HepG2 (cell line): ENCODE measurements at regions of chr10 and their contacts with region 1.

Region 1: DNA sequence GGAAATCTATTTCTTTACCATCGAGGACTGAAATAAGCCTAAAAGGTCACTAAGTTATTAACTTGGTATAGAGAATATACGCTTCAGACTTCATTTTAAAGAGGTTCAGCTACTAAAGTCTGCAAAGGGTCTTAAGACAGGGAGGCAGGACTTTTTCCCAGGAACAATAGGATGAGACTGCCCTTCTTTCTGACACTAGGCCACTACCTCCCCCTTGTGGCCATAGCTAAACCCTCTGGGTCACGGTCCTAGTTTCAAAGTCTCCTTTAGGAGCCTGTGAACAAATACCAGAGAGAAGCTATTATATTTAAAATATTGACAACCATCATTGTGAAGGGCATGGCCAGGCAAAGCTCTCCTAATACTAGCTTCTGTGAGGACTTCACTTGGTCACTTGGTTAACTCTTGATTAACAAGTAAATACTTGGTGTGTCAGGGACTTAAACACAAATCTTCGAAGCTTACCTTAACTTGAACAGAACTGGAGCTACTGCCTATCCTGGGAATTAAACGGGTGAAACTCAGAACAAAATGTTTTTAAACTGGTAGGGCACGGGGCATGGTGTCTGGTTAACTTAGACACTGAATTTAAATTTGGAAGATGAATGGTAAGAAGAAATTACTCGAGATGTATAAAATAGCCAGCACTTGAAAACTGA is 75.6 kb downstream of the CCDC6 start:
- DNase-seq: peak; percentile 38
- ATAC-seq: peak; percentile 90
- H3K4me3 ChIP-seq: no peak overlapping the region
- H3K27ac ChIP-seq: no peak overlapping the region
- H3K4me1 ChIP-seq: no peaks in the 10 kb centered on the region
- H3K27me3 ChIP-seq: no peaks in the 10 kb centered on the region
- CTCF ChIP-seq: peak; percentile 73
- EP300 ChIP-seq: no peak
- POLR2A ChIP-seq: no peak
- RAD21 ChIP-seq: no peak

Region 2: DNA sequence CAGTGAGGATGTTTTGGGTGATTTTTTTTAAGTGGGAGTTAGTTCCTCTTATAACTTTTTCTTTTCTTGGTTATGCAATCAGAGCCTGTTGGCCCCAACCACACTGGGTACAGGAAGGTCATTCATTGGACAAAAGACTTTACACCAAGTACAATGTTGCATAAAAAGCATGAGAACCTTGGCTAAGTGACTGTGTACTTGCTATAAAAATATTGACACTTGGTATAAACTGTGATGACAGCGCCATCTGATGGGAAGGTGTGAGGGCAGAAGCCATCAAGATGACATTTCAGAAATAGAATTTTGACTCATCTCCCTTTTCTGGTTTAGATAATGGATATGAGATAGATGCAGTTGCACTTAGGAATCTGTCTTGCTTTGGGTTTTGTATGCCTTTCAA is 202.0 kb after region 1 on chr10:
- CTCF ChIA-PET with region 1: interaction called, 4 read pairs
- POLR2A ChIA-PET with region 1: no interaction called
- in situ Hi-C with region 1: no loop called
- intact Hi-C with region 1: loop called (anchors 2 kb)
- DNase-seq: peak; percentile 62
- ATAC-seq: peak; percentile 77
- H3K4me3 ChIP-seq: no peak overlapping the region
- H3K27ac ChIP-seq: no peak overlapping the region
- H3K4me1 ChIP-seq: no peaks in the 10 kb centered on the region
- H3K27me3 ChIP-seq: no peaks in the 10 kb centered on the region
- CTCF ChIP-seq: peak; percentile 71
- EP300 ChIP-seq: no peak
- POLR2A ChIP-seq: no peak
- RAD21 ChIP-seq: peak; percentile 36; the same call in 1 of the 2 replicates

Region 3: DNA sequence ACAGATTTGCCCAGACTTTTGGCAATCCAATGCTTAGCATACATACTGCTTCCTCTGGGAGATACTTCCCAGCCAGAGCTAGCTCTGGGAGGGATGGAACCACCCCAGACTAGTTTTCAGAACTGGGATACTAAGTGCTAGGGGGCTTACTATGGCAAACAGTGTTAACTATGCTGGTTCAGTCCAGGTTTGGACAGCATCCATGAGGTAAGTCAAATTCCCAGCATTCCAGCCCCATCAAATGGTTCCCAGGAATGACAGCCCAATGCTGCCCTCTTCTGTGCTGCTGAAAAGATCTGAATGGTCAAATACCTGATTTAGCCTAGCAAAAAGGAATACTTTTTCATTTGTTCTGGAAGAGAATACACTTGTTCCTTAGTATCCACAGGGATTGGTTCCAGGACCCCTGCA is 217.4 kb after region 1 on chr10:
- CTCF ChIA-PET with region 1: no interaction called
- POLR2A ChIA-PET with region 1: no interaction called
- in situ Hi-C with region 1: no loop called
- intact Hi-C with region 1: loop called (anchors 1 kb)
- DNase-seq: peak; percentile 39
- ATAC-seq: peak; percentile 83
- H3K4me3 ChIP-seq: no peak overlapping the region
- H3K27ac ChIP-seq: no peak overlapping the region
- H3K4me1 ChIP-seq: no peaks in the 10 kb centered on the region
- H3K27me3 ChIP-seq: no peaks in the 10 kb centered on the region
- CTCF ChIP-seq: peak; percentile 61
- EP300 ChIP-seq: no peak
- POLR2A ChIP-seq: no peak
- RAD21 ChIP-seq: 0 out of 2 replicates have a peak, but pooled peaks have one; percentile 17

Region 4: GRCh38 chr10:60434418-60435046 is 603.8 kb after region 1 on chr10:
- CTCF ChIA-PET with region 1: no interaction called
- POLR2A ChIA-PET with region 1: no interaction called
- in situ Hi-C with region 1: no loop called
- intact Hi-C with region 1: no loop called
- DNase-seq: peak; percentile 35
- ATAC-seq: peak; percentile 70
- H3K4me3 ChIP-seq: no peak overlapping the region
- H3K27ac ChIP-seq: no peak overlapping the region
- H3K4me1 ChIP-seq: no peaks in the 10 kb centered on the region
- H3K27me3 ChIP-seq: no peaks in the 10 kb centered on the region
- CTCF ChIP-seq: peak; percentile 73
- EP300 ChIP-seq: no peak
- POLR2A ChIP-seq: no peak
- RAD21 ChIP-seq: peak; percentile 66; the same call in 1 of the 2 replicates